ENCODE measurements at regions of chr6 and their contacts with region 1.

Region 1: DNA sequence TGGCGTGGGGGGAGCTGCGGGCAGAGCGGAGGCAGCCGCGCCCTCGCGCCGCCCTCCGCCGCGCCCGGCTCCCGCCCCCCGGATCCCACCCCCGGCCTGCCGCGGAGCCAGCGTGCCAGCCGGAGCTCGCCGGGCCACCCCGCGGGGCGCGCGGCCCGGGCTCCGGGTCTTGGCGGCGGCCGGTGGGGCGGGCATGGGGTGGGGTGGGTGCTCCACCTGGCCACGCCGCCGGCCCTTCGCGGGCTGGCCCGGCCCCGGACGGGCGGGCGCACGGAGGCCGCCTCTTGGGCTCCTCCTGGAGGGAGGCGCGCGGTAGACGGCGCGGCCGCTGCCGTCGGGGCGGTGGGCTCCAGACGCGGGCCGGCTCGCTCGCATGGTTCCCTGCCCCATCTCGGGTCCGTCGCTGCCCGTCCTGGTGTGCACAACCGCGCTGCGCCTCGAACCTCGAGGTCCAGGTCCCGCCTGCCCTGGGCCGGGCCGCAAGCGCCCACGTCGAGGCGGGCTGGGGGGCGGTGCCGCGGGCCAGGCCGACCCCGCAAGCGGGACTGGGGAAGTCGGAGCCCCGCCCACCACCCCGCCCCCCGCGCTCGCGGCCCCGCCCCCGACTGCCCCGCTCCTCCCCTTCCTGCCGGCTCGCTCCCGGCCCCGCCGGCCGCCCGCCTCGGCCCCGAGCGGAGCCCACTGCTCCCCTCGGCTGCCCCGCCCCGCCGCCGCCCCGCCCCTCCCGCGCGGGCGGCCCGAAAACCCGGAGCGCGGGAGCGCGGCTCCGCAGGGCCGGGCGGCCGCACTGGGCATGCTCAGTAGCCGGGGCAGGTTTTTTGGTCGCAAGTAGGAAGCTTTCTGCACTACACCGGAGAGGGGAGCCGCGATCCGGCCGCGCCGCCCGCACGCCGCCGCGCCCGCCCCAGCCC is at the start of gene CDYL:
- DNase-seq: peak; percentile 93
- ATAC-seq: peak; percentile 79
- H3K4me3 Mint-ChIP-seq: peak within 1 kb of the TSS; percentile 81
- H3K27ac Mint-ChIP-seq: peak within 1 kb of the TSS; percentile 92
- H3K4me1 Mint-ChIP-seq: peaks cover 54% of the 10 kb centered on the region
- H3K27me3 Mint-ChIP-seq: peaks cover 11% of the 10 kb centered on the region
- total RNA-seq, gene CDYL: 22.1 to 33.7 TPM

Region 2: GRCh38 chr6:4402439-4402976 is 373.3 kb before region 1 on chr6:
- CTCF ChIA-PET with region 1: no interaction called
- POLR2A ChIA-PET with region 1: no interaction called
- intact Hi-C with region 1: no loop called
- DNase-seq: no peak
- ATAC-seq: no peak
- H3K4me3 Mint-ChIP-seq: no peak overlapping the region
- H3K27ac Mint-ChIP-seq: no peak overlapping the region
- H3K4me1 Mint-ChIP-seq: no peaks in the 10 kb centered on the region
- H3K27me3 Mint-ChIP-seq: peaks cover 7% of the 10 kb centered on the region

Region 3: DNA sequence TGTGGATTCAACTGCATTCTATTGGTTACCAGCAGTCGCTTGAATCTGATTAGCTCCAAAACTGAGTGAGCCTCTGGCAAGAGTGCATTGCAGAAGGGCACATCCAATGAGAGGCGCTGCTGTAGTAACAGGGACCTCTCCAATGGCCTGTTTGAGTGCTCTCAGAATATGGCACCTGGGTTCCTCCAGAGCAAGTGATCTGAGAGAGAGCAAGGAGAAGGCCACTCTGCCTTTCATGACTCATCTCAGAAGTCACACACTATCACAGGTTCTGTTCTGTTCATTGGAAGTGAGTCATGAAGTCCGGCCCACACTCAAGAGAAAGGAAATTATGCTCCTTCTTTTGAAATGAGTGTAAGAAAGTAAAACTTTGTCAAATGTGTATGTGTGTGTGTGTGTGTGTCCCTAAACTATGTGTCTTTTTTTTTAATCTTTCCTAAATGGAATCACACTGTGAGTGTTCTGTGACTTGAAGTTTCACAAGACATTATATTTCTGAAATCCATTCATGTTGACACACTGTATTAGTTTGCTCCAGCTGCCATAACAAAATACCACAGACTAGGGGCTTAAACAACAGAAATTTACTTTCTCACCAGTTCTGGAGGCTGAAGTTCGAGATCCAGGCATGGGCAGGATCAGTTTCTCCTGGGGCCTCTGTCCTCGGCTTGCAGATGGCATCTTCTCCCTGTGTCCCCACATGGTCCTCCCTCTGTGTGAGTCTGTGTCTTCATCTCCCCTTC is 138.0 kb before region 1 on chr6:
- CTCF ChIA-PET with region 1: no interaction called
- POLR2A ChIA-PET with region 1: interaction called, 3 read pairs
- intact Hi-C with region 1: loop called in 1 of 2 experiments (anchors 1 kb)
- DNase-seq: peak; percentile 69
- ATAC-seq: peak; percentile 99
- H3K4me3 Mint-ChIP-seq: no peak overlapping the region
- H3K27ac Mint-ChIP-seq: peak overlapping the region; percentile 78
- H3K4me1 Mint-ChIP-seq: peaks cover 27% of the 10 kb centered on the region
- H3K27me3 Mint-ChIP-seq: peaks cover 33% of the 10 kb centered on the region

Region 4: GRCh38 chr6:4788953-4789584 is 13.2 kb after region 1 on chr6:
- CTCF ChIA-PET with region 1: interaction called, 12 read pairs
- POLR2A ChIA-PET with region 1: interaction called, 4 read pairs
- intact Hi-C with region 1: loop called in 1 of 2 experiments (anchors 1 kb)
- DNase-seq: no peak
- ATAC-seq: no peak
- H3K4me3 Mint-ChIP-seq: no peak overlapping the region
- H3K27ac Mint-ChIP-seq: no peak overlapping the region
- H3K4me1 Mint-ChIP-seq: peaks cover 61% of the 10 kb centered on the region
- H3K27me3 Mint-ChIP-seq: no peaks in the 10 kb centered on the region

Region 5: DNA sequence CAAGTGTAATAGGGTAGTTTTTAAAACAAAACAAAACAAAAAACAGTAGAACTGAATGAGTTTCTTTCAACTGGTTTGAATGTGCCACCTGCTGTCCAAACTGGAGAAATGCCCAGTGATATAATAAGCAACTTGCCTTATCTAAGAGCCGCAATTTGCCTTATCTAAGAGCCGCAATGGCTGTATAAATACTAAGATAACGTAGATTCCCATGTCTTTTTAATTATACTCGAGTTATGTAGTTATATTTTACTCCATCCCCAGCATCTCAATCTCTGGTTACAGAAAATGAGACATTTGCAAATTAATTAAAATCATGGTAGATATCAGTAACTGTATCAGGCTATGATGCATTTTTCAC is 160.8 kb after region 1 on chr6:
- CTCF ChIA-PET with region 1: interaction called, 3 read pairs
- POLR2A ChIA-PET with region 1: no interaction called
- intact Hi-C with region 1: loop called in 1 of 2 experiments (anchors 5 kb)
- DNase-seq: no peak
- ATAC-seq: no peak
- H3K4me3 Mint-ChIP-seq: no peak overlapping the region
- H3K27ac Mint-ChIP-seq: no peak overlapping the region
- H3K4me1 Mint-ChIP-seq: peaks cover 55% of the 10 kb centered on the region
- H3K27me3 Mint-ChIP-seq: no peaks in the 10 kb centered on the region

Region 6: GRCh38 chr6:5003604-5004372 is 227.9 kb after region 1 on chr6 and contains the start of gene RPP40:
- CTCF ChIA-PET with region 1: interaction called, 3 read pairs
- POLR2A ChIA-PET with region 1: no interaction called
- intact Hi-C with region 1: loop called (anchors 1 to 5 kb)
- DNase-seq: peak; percentile 99
- ATAC-seq: peak; percentile 97
- H3K4me3 Mint-ChIP-seq: peak within 1 kb of the TSS; percentile 87
- H3K27ac Mint-ChIP-seq: peak within 1 kb of the TSS; percentile 94
- H3K4me1 Mint-ChIP-seq: peaks cover 8% of the 10 kb centered on the region
- H3K27me3 Mint-ChIP-seq: no peaks in the 10 kb centered on the region
- total RNA-seq, gene RPP40: 7.7 to 11.2 TPM

Region 7: GRCh38 chr6:5279891-5280338 is 504.1 kb after region 1 on chr6:
- CTCF ChIA-PET with region 1: no interaction called
- POLR2A ChIA-PET with region 1: no interaction called
- intact Hi-C with region 1: loop called in 1 of 2 experiments (anchors 5 kb)
- DNase-seq: peak; percentile 71
- ATAC-seq: peak; percentile 92
- H3K4me3 Mint-ChIP-seq: peak overlapping the region; percentile 10
- H3K27ac Mint-ChIP-seq: peak overlapping the region; percentile 91
- H3K4me1 Mint-ChIP-seq: peaks cover 43% of the 10 kb centered on the region
- H3K27me3 Mint-ChIP-seq: no peaks in the 10 kb centered on the region